ENCODE measurements at regions of chr12 and their contacts with region 1.

Region 1: DNA sequence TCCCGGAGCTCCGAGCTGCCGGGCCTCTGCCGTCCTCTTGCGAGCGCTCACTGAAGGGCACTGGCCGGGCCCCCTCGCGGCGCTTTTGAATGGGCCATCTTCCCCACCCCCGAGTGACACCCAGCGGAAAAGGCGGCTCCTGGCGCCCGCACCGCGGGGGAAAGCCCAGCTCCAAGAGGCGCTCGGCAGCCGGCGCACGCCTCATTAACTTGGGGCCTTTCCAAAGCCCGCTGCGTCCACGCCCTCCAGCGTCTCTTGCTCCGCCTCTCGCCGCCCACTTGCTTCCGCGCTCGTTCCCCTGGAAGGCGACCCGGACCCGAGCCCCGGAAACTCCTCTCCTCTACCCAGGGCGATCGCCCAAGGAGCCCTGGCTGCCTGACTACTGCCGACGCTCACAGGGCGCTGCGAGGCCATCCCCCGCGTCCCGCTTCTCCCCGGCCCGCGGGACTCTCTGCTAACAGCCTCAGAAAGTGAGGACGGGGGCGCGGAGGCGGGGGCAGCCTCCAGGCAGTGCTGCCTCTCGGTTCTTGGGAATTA is at the start of gene PHLDA1:
- DNase-seq: peak; percentile 96
- H3K4me3 ChIP-seq: peak within 1 kb of the TSS; percentile 77 to 99 (median 82)
- H3K27ac ChIP-seq: peak within 1 kb of the TSS; percentile 87
- H3K4me1 ChIP-seq: peaks cover 26% of the 10 kb centered on the region
- H3K27me3 ChIP-seq: no peaks in the 10 kb centered on the region
- CTCF ChIP-seq: peak; percentile 60 to 79
- POLR2A ChIP-seq: peak; percentile 98
- total RNA-seq, gene PHLDA1: 26.8 and 30.8 TPM in 2 replicates

Region 2: DNA sequence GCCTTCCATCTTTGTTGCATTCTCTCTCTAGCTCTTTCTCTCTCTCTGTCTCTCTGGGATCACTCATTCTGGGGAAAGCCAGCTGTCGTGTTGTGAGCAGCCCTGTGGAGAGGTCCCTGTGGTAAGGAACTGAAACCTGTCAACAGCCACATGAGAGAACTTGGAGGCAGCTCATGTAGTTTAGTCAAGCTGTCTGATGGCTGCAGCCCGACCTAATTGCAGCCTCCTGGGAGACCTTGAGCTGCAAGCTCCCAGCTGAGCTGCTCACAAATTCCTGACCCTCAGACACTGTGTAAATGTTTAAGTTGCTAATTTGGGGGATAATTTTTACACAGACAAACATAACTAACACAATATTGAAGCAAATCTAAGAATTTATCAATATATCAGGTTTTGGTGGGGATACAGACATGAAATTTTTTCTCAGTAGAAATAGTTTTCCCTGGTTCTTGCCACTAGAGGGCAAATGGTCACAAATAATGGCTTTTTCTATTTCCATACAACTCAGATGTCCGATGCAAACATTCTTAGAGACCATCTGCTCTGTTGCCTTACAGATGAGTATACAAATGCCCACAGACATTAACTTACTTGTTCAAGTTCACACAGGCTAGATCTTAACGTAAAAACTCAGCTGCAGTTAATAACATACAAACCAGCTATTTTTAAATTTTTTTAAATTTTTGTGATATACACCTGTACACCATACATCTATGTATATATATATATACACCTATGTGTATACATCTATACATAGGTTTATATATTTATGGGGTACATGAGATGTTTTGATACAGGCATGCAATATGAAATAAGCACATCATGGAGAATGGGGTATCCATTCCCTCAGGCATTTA is 504.7 kb before region 1 on chr12:
- CTCF ChIA-PET with region 1: interaction called, 95 read pairs
- POLR2A ChIA-PET with region 1: interaction called, 8 read pairs
- dilution Hi-C with region 1: loop called (anchors 25 kb)
- intact Hi-C with region 1: loop called (anchors 1 kb)
- DNase-seq: peak; percentile 70
- H3K4me3 ChIP-seq: no peak overlapping the region
- H3K27ac ChIP-seq: no peak overlapping the region
- H3K4me1 ChIP-seq: no peaks in the 10 kb centered on the region
- H3K27me3 ChIP-seq: no peaks in the 10 kb centered on the region
- CTCF ChIP-seq: peak; percentile 38 to 49
- POLR2A ChIP-seq: no peak

Region 3: GRCh38 chr12:75635606-75636410 is 395.8 kb before region 1 on chr12:
- CTCF ChIA-PET with region 1: interaction called, 4 read pairs
- POLR2A ChIA-PET with region 1: no interaction called
- dilution Hi-C with region 1: no loop called
- intact Hi-C with region 1: loop called (anchors 5 kb)
- DNase-seq: peak; percentile 74
- H3K4me3 ChIP-seq: no peak overlapping the region
- H3K27ac ChIP-seq: peak overlapping the region; percentile 41
- H3K4me1 ChIP-seq: peaks cover 24% of the 10 kb centered on the region
- H3K27me3 ChIP-seq: no peaks in the 10 kb centered on the region
- CTCF ChIP-seq: no peak
- POLR2A ChIP-seq: no peak

Region 4: DNA sequence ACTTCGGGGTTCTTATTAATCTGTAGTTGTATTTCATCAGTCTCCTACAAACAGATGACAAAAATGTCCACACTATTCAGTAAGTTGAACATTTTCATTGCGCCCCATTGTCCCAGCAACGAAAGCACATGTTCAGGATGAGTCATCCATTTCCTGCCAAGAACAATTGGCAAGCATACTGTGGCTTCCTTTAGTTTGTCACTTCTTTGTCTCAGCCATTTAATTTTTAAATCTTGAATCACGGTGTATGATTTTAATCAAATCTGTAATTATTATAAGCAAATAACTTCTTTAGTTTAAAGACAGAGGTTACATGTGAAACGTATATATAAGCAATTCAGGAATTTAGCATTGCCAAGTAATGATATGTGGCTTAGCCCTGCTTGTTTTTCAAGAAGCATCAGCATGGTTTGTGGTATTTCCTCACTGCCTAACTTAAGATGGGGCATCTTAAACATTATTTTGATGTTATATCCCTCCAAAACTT is 308.8 kb before region 1 on chr12:
- CTCF ChIA-PET with region 1: interaction called, 5 read pairs
- POLR2A ChIA-PET with region 1: interaction called, 6 read pairs
- dilution Hi-C with region 1: no loop called
- intact Hi-C with region 1: loop called (anchors 1 kb)
- DNase-seq: peak; percentile 95
- H3K4me3 ChIP-seq: no peak overlapping the region
- H3K27ac ChIP-seq: peak overlapping the region; percentile 92
- H3K4me1 ChIP-seq: peaks cover 46% of the 10 kb centered on the region
- H3K27me3 ChIP-seq: no peaks in the 10 kb centered on the region
- CTCF ChIP-seq: no peak
- POLR2A ChIP-seq: no peak

Region 5: DNA sequence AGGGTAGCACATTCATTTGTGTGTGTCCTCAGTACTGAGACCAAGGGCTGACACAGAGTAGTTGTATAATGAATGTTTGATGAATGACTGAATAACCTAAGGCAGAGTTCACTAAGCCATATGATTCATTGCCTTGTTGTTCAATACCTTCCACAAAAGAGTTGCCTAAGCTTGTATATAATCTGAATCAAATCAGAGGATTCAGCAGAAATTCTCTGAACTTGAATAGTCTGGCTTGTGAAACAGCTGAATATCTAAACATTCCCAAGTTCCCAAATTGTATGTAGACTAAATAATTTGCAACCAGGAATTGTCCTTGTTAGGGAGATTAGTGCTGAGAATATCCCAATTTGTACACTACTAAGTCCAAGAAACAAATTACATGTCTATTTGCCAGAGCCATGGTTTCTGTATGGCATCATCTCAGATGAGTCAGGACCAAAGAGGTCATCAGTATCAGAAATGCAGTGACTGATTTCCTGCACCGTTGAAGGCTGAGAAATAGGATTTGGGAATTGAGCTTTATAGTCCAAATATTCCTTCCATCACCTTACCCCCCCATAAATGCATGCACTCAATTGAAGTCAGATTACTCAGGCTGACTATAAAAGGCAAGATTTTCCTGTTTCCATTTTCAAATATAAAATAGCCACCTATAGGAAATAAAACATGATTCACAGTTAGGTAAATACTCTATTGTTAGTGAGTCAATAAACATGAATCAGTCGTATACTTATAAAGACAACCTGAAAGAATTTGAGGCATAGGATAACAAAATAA is 168.7 kb before region 1 on chr12:
- CTCF ChIA-PET with region 1: interaction called, 3 read pairs
- POLR2A ChIA-PET with region 1: interaction called, 3 read pairs
- dilution Hi-C with region 1: no loop called
- intact Hi-C with region 1: loop called (anchors 2 kb)
- DNase-seq: peak; percentile 84
- H3K4me3 ChIP-seq: no peak overlapping the region
- H3K27ac ChIP-seq: peak overlapping the region; percentile 76
- H3K4me1 ChIP-seq: peaks cover 38% of the 10 kb centered on the region
- H3K27me3 ChIP-seq: no peaks in the 10 kb centered on the region
- CTCF ChIP-seq: no peak
- POLR2A ChIP-seq: no peak

Region 6: DNA sequence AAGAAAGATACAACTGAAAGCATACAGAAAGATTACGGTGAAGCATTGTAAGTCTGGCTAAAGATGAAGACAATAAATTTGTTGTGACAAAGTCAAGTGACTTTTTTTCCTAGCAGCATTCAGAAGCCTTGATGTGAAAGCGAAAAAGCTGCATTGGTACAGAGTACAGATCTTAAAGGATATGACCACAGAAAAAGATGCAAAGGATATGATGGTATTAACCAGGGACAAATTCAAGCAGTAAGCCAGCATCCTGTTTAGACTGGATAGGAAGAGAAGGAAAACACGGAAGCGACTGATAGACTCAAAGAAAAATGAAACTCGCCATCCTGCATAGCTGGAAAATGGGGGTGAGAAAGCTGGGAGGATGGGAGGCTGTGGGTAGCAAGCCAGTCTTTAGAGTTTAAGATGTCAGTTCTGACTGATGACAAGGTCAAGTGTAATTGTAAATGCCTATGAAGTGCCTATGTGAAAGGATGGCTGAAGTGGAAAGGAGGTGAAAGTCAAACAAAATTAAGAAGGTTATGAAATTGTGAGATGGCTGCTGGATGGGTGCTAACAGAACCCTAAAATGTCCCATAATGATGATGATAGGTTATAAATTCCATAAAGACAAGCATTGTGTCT is 92.5 kb before region 1 on chr12:
- CTCF ChIA-PET with region 1: interaction called, 9 read pairs
- POLR2A ChIA-PET with region 1: interaction called, 10 read pairs
- dilution Hi-C with region 1: no loop called
- intact Hi-C with region 1: loop called (anchors 1 kb)
- DNase-seq: peak; percentile 61
- H3K4me3 ChIP-seq: peak overlapping the region in 1 of 3 experiments; percentile 19
- H3K27ac ChIP-seq: peak overlapping the region; percentile 44
- H3K4me1 ChIP-seq: peaks cover 27% of the 10 kb centered on the region
- H3K27me3 ChIP-seq: no peaks in the 10 kb centered on the region
- CTCF ChIP-seq: no peak
- POLR2A ChIP-seq: no peak

Region 7: GRCh38 chr12:75996861-75997447 is 34.7 kb before region 1 on chr12:
- CTCF ChIA-PET with region 1: interaction called, 6 read pairs
- POLR2A ChIA-PET with region 1: interaction called, 3 read pairs
- dilution Hi-C with region 1: no loop called
- intact Hi-C with region 1: loop called (anchors 2 kb)
- DNase-seq: peak; percentile 50
- H3K4me3 ChIP-seq: no peak overlapping the region
- H3K27ac ChIP-seq: peak overlapping the region; percentile 67
- H3K4me1 ChIP-seq: peaks cover 31% of the 10 kb centered on the region
- H3K27me3 ChIP-seq: no peaks in the 10 kb centered on the region
- CTCF ChIP-seq: no peak
- POLR2A ChIP-seq: no peak

Region 8: DNA sequence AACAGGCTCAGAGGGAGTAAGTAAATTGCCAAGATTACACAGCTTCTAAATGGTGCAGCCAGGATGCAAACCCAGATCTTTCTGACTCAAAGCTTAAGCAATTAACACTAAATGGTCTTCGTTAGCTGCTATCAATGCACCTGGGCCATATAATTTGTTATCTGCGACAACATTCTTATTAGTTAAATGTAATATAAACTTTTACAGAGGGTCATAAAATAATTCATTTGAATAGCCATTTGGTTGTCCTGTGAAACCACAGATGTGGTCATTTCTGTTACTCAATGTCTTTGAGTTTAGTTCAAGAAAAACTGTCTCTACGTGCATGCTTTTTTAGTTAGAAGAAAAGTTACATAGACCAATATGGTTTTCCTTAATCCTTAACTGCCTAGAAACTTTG is 75.0 kb after region 1 on chr12:
- CTCF ChIA-PET with region 1: no interaction called
- POLR2A ChIA-PET with region 1: no interaction called
- dilution Hi-C with region 1: no loop called
- intact Hi-C with region 1: no loop called
- DNase-seq: no peak
- H3K4me3 ChIP-seq: no peak overlapping the region
- H3K27ac ChIP-seq: no peak overlapping the region
- H3K4me1 ChIP-seq: no peaks in the 10 kb centered on the region
- H3K27me3 ChIP-seq: no peaks in the 10 kb centered on the region
- CTCF ChIP-seq: no peak
- POLR2A ChIP-seq: no peak

Measured in endothelial cell of umbilical vein (primary cell).